Natural killer cell (primary cell): ENCODE measurements at regions of chr4 and their contacts with region 1.

Region 1: DNA sequence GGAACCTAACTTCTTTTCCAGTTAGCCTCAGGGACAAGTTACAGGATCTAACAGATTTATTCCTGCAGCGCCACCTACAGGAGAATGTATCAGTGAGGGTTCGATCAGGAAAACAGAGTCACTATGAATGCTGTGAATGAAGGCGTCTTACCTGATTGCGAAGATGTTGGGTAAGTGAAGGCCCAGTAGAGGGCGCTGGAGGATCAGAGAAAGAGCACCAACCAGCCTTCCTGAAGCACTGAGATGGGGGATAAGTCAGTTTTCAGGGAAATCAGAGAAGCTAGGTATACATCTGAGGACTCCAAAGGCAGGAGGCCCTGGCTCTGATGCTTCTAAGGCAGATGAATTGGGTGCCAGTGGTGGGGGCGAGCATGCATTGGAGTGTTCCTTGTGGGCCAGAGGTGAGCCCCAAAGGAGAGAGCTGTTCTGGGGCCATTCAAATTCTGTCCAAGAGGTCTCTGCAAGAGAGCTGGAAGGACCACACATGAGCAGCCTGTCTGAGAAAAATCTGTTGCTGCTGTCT is 169.9 kb upstream of the AADAT start:
- DNase-seq: peak; percentile 11 to 21
- ATAC-seq: peak in 2 of 3 donors; percentile 55 to 75
- H3K4me3 ChIP-seq: no peak overlapping the region
- H3K4me3 Mint-ChIP-seq: no peak overlapping the region
- H3K27ac ChIP-seq: no peak overlapping the region
- H3K27ac Mint-ChIP-seq: no peak overlapping the region
- H3K4me1 ChIP-seq: no peaks in the 10 kb centered on the region
- H3K4me1 Mint-ChIP-seq: no peaks in the 10 kb centered on the region
- H3K27me3 ChIP-seq: no peaks in the 10 kb centered on the region
- H3K27me3 Mint-ChIP-seq: no peaks in the 10 kb centered on the region
- CTCF ChIP-seq: peak; percentile 59

Region 2: DNA sequence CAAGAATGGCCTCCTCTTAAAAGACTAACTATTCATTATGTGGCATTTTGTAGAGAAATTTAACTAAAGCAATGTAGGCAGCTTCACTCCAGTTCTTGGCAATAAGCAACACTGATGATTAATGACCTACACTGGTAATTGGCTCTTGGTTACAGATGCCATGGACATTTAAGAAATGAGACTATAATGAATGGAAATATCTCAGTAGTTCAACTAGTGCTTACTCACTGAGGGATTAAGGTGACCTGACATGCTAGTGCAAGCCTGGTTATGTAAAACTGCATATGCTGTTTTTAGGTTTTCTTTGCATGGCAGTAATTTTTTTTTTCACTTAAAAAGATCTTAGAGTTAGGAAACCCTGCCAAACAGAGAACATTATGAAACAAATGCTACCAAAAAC is 17.2 kb before region 1 on chr4:
- intact Hi-C with region 1: no loop called
- DNase-seq: no peak
- ATAC-seq: no peak
- H3K4me3 ChIP-seq: no peak overlapping the region
- H3K4me3 Mint-ChIP-seq: no peak overlapping the region
- H3K27ac ChIP-seq: no peak overlapping the region
- H3K27ac Mint-ChIP-seq: no peak overlapping the region
- H3K4me1 ChIP-seq: no peaks in the 10 kb centered on the region
- H3K4me1 Mint-ChIP-seq: no peaks in the 10 kb centered on the region
- H3K27me3 ChIP-seq: no peaks in the 10 kb centered on the region
- H3K27me3 Mint-ChIP-seq: no peaks in the 10 kb centered on the region
- CTCF ChIP-seq: no peak

Region 3: DNA sequence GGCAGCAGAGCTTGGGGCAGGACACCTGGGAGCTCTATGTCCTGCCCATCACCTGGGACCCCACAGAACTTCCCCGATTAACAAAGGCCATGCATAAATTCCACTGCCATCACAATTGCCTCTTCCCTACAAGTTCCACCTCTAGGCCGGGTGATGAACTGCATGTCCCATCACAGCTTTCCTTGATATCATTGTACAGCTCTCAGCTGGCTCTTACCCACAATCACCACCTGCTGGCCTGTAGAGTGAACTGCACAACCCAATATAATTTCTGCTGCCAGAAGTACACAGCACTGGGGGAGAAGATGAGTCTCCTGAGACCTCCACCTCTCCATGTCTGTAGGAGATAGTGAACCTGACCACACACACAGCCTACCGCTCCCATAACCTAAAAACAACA is 115.1 kb after region 1 on chr4:
- intact Hi-C with region 1: loop called (anchors 2 kb)
- DNase-seq: no peak
- ATAC-seq: peak; percentile 50 to 83 (median 76)
- H3K4me3 ChIP-seq: no peak overlapping the region
- H3K4me3 Mint-ChIP-seq: no peak overlapping the region
- H3K27ac ChIP-seq: no peak overlapping the region
- H3K27ac Mint-ChIP-seq: no peak overlapping the region
- H3K4me1 ChIP-seq: peaks cover 6% of the 10 kb centered on the region
- H3K4me1 Mint-ChIP-seq: peaks cover 0 to 5% of the 10 kb centered on the region in 2 donors
- H3K27me3 ChIP-seq: no peaks in the 10 kb centered on the region
- H3K27me3 Mint-ChIP-seq: no peaks in the 10 kb centered on the region
- CTCF ChIP-seq: peak; percentile 40

Region 4: DNA sequence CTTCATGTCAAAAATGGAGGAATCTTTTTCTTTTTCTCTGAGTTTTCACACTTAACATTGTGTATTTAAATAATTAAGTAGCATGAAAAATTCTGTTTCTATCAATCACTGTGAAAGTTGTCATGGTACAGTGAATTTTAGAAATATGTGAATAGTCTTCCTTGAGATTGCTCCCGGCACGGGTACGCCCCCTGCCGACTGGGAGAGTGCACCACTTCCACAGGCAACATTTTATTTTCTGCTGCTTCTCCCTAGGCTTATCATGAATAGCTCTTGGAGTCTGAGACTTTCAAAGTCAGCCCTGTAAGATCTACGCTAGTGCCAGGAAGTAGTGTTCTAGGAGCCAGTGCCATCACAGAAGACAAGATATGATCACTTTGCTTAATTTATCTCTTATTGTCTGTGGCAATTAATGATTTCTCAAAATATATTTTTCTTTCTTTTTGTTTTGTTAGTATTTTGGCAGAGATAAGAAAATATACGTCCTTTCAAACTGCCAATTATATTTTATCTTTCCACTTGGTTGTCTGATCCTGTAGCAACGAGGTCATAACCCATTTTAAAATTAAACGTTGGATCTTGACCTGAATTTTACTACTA is 593.8 kb after region 1 on chr4:
- intact Hi-C with region 1: loop called (anchors 2 kb)
- DNase-seq: no peak
- ATAC-seq: no peak
- H3K4me3 ChIP-seq: no peak overlapping the region
- H3K4me3 Mint-ChIP-seq: no peak overlapping the region
- H3K27ac ChIP-seq: no peak overlapping the region
- H3K27ac Mint-ChIP-seq: no peak overlapping the region
- H3K4me1 ChIP-seq: no peaks in the 10 kb centered on the region
- H3K4me1 Mint-ChIP-seq: no peaks in the 10 kb centered on the region
- H3K27me3 ChIP-seq: no peaks in the 10 kb centered on the region
- H3K27me3 Mint-ChIP-seq: no peaks in the 10 kb centered on the region
- CTCF ChIP-seq: peak; percentile 36